ENCODE measurements at regions of chr6 and their contacts with region 1.

Region 1: DNA sequence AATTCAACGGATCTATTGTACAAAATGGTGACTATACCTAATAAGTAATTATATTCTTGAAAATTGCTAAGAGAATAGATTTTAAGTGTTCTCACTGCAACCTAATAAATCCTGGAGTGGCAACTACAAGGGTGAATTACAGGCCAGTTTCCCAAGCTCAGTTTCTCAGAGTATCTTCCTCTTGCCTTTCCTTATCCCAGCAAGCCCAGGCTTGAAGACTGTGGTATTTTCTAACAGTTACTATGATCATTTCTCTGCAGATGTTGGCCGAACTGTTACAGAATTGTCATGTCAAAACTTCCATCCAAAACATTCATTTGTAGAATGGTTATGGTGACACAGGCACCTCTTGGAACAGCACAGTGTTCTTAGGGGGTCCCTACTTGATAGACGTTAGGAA is 138.1 kb upstream of the PTCHD4 start:
- DNase-seq: no peak
- ATAC-seq: no peak
- H3K4me3 ChIP-seq: no peak overlapping the region
- H3K27ac ChIP-seq: no peak overlapping the region
- H3K4me1 ChIP-seq: no peaks in the 10 kb centered on the region
- H3K27me3 ChIP-seq: no peaks in the 10 kb centered on the region
- CTCF ChIP-seq: no peak
- EP300 ChIP-seq: no peak
- POLR2A ChIP-seq: no peak
- RAD21 ChIP-seq: no peak

Region 2: DNA sequence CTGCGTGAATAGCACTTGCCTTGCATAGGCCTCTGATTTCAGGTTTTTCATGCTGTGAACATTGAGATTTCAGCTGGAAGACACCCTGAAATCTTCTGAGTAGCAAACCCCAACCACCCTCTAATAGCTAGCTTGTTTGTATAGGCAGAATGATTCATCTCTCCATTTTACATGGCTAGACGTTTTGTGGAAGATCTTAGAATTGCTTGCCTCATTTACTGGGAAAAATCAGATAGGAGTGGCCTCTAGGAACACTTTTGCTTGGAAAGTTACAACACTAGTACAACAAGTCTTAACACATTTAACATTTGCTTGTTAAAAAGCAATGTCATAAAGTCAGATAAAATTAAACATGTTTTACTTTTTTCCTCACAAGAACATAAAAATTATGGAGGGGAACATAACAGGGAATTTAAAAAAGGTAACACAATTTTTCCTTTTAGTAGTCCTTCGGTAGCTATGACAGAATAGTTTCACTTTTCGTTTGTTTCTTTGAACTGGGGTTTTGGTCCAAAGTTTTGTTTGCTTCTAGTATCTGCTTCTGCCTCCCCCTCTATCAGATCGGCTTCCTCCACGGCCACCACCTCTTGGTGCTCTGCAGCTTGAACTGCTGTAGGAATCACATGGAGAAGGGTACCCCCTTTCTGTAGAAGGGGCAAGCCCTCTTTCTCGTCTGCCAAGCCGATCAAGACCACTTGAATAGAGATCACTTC is 35.8 kb before region 1 on chr6:
- CTCF ChIA-PET with region 1: no interaction called
- POLR2A ChIA-PET with region 1: no interaction called
- in situ Hi-C with region 1: no loop called
- intact Hi-C with region 1: loop called (anchors 2 kb)
- DNase-seq: peak; percentile 70
- ATAC-seq: peak; percentile 86
- H3K4me3 ChIP-seq: peak overlapping the region; percentile 51 to 62 (median 61)
- H3K27ac ChIP-seq: no peak overlapping the region
- H3K4me1 ChIP-seq: peaks cover 21% of the 10 kb centered on the region
- H3K27me3 ChIP-seq: no peaks in the 10 kb centered on the region
- CTCF ChIP-seq: 0 out of 2 replicates have a peak, but pooled peaks have one; percentile 4
- EP300 ChIP-seq: no peak
- POLR2A ChIP-seq: no peak
- RAD21 ChIP-seq: no peak

Measured in HepG2 (cell line).